AG04449 (cell line): ENCODE measurements at regions of chr11 and their contacts with region 1.

Region 1: GRCh38 chr11:65314501-65315203 is at the start of gene CDC42EP2:
- DNase-seq: no peak
- H3K4me3 ChIP-seq: peak within 1 kb of the TSS; percentile 87
- CTCF ChIP-seq: no peak

Region 2: DNA sequence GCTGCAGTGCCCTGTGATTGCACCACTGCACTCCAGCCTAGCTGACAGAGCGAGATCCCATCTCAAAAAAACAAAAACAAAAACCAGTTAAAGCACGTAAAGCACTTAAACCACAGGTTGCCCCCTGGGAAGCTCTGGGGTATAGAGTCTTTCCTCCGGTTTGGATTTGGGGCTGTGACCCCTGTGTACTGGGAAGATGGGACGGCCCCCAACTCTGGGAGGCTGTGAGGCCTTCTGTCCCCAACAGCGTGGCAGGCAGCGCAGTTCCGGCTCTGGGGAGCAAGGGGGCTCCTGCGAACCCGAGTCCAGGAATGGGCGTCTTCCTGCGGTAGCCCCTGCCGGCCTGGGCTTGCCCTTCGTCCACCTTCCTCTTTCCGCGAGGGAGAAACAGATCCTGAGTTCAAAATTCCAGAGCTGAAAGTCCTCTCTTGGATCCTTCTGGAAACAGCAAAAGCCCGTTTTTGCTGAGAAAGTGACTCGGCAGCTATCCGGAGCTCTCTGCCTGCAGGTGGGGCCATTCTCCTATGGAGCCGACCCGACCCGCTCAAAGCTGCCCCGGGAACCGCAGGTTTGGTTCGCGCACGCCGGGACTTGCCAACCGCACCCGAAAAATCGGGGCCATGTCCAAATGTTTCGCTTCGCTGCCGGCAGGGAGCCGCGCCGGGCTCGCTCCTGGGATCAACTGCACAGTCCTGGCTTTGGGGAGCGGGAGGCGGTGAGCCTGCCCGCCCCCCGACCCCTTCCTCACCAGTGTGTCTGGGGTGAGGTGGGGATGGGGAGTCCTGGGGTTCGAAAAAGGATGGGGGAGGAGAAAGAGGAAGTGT is 89.2 kb before region 1 on chr11:
- CTCF ChIA-PET with region 1: interaction called, 28 read pairs
- POLR2A ChIA-PET with region 1: interaction called, 3 read pairs
- DNase-seq: no peak
- H3K4me3 ChIP-seq: peak overlapping the region; percentile 49
- CTCF ChIP-seq: peak; percentile 47

Region 3: DNA sequence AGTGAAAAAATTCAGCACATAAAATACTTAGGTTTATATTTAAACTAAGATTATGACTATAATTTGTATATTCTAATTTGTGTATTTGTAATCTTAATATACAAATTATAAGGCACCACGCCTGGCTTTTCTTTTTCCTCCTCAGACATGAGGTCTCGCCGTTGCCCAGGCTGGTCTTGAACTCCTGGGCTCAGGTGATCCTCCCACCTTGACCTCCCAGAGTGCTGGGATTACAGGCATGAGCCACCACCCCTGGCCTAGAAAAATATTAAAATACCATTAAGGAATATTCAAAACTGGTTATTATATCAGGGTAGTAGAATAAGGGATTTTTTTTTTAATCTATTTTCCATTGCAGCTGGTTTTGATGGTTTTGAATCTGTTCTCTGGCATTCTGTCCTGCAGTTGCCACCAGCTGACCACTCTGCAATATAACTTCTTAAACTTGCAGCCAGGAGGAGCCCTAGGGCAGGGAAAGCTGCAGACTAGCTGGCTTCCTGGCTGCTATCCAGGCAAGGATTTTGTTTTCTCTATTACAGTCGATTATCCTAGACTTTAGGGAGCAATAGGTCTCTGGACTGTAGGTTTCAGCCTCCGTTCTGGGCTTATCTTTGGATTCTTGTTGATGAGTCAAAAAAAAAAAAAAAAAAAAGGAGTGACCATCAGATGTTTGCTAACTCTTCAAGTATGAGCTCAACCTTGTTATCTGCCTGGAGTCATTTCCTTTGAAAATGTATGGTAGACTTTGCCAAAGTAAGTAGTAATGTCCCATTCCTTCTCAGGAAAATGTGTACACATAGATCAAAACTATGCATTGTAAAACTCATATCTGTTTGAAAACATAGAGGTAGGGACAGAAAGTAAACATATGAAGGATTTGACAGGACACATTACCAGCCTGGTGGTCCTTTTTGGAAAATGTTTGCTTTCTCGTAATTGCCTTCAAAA is 39.6 kb before region 1 on chr11:
- CTCF ChIA-PET with region 1: interaction called, 1,993 read pairs
- POLR2A ChIA-PET with region 1: interaction called, 54 read pairs
- DNase-seq: peak; percentile 92
- H3K4me3 ChIP-seq: no peak overlapping the region
- CTCF ChIP-seq: peak; percentile 69

Region 4: DNA sequence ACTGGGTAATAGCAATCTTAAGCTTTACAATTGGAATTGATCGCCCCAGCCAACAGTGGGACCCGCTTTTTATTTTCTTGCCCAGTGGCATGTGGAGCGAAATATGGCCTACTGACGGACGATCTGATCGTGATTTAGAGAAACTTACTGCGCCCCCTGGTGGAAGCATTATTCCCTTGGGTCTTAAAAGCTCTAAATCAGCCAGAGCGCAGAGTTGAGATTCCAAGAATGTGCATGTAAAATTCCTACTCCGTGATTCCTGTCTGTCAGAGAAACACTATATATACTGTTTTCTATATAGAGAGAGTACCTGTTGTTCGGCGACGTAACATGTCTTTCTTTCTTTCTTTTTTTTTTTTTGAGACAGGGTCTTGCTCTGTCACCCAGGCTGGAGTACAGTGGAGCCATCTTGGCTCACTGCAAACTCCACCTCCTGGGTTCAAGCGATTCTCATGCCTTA is 15.3 kb after region 1 on chr11:
- CTCF ChIA-PET with region 1: interaction called, 1,993 read pairs
- POLR2A ChIA-PET with region 1: interaction called, 7 read pairs
- DNase-seq: peak; percentile 61
- H3K4me3 ChIP-seq: no peak overlapping the region
- CTCF ChIP-seq: peak; percentile 66

Region 5: GRCh38 chr11:65418711-65419459 is 104.2 kb after region 1 on chr11:
- CTCF ChIA-PET with region 1: no interaction called
- POLR2A ChIA-PET with region 1: no interaction called
- DNase-seq: no peak
- H3K4me3 ChIP-seq: peak overlapping the region; percentile 46
- CTCF ChIP-seq: no peak

Region 6: DNA sequence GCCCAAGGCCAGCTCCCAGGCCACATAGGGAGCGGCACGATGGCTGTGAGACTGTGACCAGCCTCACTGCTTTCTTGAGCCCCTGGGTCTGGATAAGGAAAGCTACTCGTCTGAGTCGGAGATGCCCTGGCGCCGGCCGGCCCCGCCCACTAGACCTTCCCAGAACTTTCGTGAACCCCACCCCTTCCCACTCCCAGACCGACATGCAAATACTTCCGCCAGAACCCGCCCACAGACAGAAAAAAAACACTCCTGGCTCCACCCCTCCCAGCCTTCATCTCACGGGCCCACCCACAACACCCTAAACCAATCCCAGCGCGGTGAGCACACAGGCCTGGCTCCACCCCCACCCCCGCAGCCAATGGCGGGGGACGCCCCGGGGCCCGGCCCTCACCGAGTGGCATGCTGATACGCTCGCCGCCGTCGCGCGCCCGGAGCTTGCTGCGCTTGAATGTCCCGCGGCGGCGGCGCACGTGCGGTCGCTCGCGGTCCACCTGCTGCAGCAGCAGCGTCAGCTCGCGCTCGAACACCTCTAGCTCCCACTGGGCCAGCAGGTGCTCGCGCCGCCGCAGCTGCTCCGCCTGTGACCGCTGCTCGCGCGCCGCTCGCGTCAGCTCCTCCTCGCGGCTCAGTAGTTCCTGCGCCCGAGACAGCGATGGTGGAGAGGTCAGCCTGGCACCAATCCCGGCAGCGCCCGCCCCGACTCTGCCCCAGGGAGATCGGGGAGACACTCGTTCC is 292.4 kb after region 1 on chr11:
- CTCF ChIA-PET with region 1: no interaction called
- POLR2A ChIA-PET with region 1: no interaction called
- DNase-seq: peak; percentile 59
- H3K4me3 ChIP-seq: peak overlapping the region; percentile 40
- CTCF ChIP-seq: no peak